SK-N-SH (cell line): ENCODE measurements at regions of chr22 and their contacts with region 1.

Region 1: GRCh38 chr22:31561238-31561887 is 65.0 kb downstream of the SFI1 start:
- DNase-seq: peak; percentile 76
- H3K4me3 ChIP-seq: no peak overlapping the region
- H3K27ac ChIP-seq: peak overlapping the region; percentile 8 to 40; a peak in 2 of 4 replicates
- H3K4me1 ChIP-seq: peaks cover 0 to 2% of the 10 kb centered on the region in 2 experiments; a peak in 3 of 4 replicates
- H3K27me3 ChIP-seq: no peaks in the 10 kb centered on the region
- CTCF ChIP-seq: peak; percentile 81
- EP300 ChIP-seq: no peak
- RAD21 ChIP-seq: peak; percentile 83

Region 2: DNA sequence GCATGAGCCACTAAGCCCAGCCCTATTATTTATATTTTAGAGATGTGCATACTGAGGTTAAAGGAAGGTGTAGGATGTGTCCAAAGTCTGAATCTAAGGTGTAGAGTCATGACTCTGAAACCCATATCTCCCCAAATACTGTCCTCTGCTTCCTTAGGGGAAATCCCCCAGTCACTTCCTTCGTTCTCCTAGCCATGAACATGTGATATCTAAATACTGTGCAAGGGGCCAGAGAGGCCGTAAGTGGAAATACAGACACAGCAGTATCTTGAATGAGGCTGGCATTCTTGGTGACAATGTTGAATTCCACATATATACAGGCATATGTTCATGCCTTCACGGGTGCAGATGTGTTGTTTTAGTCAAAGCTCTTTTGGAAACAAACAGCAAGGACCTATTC is 193.9 kb before region 1 on chr22:
- CTCF ChIA-PET with region 1: no interaction called
- POLR2A ChIA-PET with region 1: no interaction called
- DNase-seq: no peak
- H3K4me3 ChIP-seq: no peak overlapping the region
- H3K27ac ChIP-seq: no peak overlapping the region
- H3K4me1 ChIP-seq: no peaks in the 10 kb centered on the region
- H3K27me3 ChIP-seq: no peaks in the 10 kb centered on the region
- CTCF ChIP-seq: no peak
- EP300 ChIP-seq: no peak
- RAD21 ChIP-seq: no peak

Region 3: GRCh38 chr22:31544481-31545480 is 16.6 kb before region 1 on chr22:
- CTCF ChIA-PET with region 1: interaction called, 17 read pairs
- POLR2A ChIA-PET with region 1: no interaction called
- DNase-seq: no peak
- H3K4me3 ChIP-seq: no peak overlapping the region
- H3K27ac ChIP-seq: no peak overlapping the region
- H3K4me1 ChIP-seq: no peaks in the 10 kb centered on the region
- H3K27me3 ChIP-seq: no peaks in the 10 kb centered on the region
- CTCF ChIP-seq: no peak
- EP300 ChIP-seq: no peak
- RAD21 ChIP-seq: no peak

Region 4: DNA sequence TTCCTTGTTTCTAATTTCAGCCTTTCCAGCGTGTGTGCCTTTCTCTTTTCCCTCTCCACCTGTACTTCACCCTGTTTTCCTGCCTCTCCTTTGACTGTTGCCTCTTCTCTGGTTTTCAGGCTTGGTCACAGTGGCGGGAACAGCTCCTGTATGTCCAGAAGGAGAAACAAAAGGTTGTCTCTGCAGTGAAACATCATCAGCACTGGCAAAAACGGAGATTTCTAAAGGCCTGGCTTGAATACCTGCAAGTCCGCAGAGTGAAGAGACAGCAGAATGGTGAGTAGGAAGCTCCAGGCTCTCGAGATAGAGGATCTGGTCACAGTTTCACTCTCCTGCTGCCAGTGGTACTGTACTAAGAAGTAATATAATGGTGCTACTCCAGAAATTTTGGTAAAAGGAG is 11.6 kb after region 1 on chr22:
- CTCF ChIA-PET with region 1: interaction called, 12 read pairs
- POLR2A ChIA-PET with region 1: no interaction called
- DNase-seq: no peak
- H3K4me3 ChIP-seq: no peak overlapping the region
- H3K27ac ChIP-seq: no peak overlapping the region
- H3K4me1 ChIP-seq: no peaks in the 10 kb centered on the region
- H3K27me3 ChIP-seq: no peaks in the 10 kb centered on the region
- CTCF ChIP-seq: no peak
- EP300 ChIP-seq: no peak
- RAD21 ChIP-seq: no peak

Region 5: DNA sequence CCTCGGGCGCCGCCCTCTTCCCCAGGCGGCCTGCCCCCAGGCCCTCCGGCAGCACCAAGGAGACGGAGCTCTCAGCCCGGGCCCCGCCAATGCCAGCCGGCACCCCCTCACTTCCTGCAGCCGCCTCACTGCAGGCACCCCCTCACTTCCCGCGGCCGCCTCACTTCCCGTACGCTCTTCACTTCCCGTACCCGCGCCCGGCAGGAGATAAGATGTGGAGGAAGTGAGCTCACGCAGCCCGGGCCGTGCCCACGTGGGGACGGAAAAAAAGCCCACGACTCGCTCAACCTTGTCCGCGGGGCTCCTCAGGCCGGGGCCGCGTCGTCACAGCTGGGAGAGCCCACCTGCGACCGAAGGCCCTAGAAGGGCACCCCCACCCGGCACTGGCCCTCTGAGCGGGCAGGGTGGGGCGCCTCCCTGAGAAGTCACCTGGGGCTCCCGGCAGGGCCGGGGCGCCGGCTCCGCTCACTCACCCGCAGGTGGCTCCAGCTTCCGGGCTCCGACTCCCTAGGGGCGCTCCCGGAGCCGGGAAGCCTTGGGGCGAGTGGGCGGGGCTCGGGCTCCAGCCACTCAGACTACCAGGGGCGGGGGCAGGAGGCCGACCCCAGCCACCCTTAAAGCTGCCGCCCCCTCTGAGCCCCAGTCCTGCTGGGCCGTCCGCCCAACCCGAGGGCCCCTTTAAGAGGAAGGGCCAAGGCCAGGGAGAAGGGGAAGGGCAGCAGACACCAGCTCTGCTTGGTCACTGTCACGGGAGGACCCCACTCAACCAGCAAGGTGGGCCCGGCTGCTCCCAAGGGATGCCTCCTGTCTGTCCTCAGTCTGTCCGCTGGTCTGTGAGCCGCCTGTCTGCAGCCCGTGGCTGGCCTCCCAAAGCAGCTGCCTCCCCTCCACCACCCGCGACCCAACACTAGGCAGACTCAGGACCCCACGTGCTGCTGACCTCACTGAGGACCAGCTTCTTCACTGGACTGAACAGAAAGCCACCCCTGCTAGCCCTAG is 69.3 kb after region 1 on chr22:
- CTCF ChIA-PET with region 1: interaction called, 48 read pairs
- POLR2A ChIA-PET with region 1: interaction called, 4 read pairs
- DNase-seq: peak; percentile 93
- H3K4me3 ChIP-seq: peak overlapping the region; percentile 78 to 91
- H3K27ac ChIP-seq: peak overlapping the region; percentile 77 to 80
- H3K4me1 ChIP-seq: peaks cover 0 to 49% of the 10 kb centered on the region in 2 experiments; a peak in 1 of 4 replicates
- H3K27me3 ChIP-seq: no peaks in the 10 kb centered on the region
- CTCF ChIP-seq: no peak; the same call in 1 of the 2 replicates
- EP300 ChIP-seq: no peak
- RAD21 ChIP-seq: no peak